GM13976 (cell line): ENCODE measurements at regions of chr19 and their contacts with region 1.

Region 1: DNA sequence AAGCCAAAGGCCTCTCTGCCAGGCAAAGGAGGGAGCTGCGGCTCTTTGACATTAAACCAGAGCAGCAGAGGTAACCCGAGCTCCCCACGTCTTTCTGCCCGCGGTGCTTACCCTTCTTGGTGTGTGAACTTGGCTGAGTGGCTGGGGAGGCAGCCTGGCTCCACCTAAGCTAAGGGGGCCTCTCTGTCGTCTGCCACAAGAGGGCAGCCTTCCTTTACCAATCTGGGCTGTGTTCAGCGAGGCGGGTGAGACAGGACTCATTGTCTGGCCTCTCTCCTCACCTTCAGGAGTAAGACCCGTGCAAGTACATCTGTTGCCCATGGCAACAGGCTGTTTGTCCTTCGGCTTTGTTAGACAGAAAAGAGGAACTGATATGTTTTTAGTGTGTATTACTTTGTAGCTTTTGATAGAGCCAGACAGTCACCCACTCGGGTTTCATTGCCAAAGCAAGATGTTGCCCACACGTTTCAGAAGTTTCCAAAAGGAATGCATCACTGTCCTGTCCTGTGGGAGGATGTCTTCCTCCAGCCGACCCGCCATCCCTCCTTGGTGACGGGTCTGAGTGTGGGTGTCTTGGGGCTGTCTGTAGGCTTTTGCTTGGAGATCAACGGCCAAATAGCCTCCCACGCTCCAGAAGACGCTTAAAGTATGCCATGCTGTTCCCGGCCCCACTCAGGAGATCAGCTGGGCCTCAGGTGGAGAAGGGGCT is 4.6 kb downstream of the POP4 start:
- DNase-seq: peak; percentile 92
- CTCF ChIP-seq: peak; percentile 95

Region 2: GRCh38 chr19:29680447-29680846 is 69.7 kb after region 1 on chr19:
- in situ Hi-C with region 1: loop called (anchors 10 kb)
- DNase-seq: peak; percentile 65
- CTCF ChIP-seq: no peak